CD4-positive, alpha-beta T cell (primary cell): ENCODE measurements at regions of chr10 and their contacts with region 1.

Region 1: DNA sequence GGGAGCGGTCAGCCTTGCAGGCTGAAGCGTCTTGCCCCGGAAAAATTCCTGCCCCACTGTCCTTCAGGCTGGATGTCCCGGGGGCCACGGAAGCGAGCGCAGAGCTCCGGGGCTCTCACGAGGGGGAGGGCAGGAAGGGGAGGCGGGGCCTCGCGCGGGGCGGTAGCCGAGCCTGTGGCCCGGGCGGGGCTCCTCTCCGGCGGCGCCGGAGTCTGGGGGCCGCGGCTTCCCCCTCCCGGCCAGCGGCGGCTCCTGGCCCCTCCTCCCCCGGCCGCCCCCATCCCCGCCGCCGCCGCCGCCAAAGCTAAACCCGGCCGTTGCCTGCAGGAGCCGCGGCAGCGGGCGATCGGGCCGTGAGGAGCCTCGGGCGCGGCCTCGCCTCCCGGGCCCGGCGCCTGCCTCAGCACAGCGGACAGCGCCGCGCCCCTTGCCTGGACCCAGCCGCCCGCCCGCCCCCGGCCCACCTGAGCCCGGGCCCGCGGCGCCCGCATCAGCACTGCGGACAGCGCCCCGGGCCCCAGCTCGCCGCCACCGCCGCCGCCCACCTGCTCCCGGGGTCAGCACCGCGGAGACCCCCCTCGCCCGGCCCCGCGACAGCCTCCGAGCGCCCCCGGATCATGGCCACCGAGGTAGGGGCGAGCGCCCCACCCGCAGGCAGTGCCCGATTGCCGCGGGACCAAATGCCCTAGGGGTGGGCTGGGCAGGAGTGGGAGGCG is at the start of gene GOLGA7B:
- DNase-seq: peak; percentile 32 to 82 (median 61)
- ATAC-seq: peak; percentile 78
- H3K4me3 ChIP-seq: peak within 1 kb of the TSS; percentile 74
- H3K4me3 Mint-ChIP-seq: peak within 1 kb of the TSS; percentile 95
- H3K27ac ChIP-seq: no peak within 1 kb of the TSS
- H3K27ac Mint-ChIP-seq: peak within 1 kb of the TSS; percentile 77
- H3K4me1 ChIP-seq: peaks cover 46% of the 10 kb centered on the region
- H3K4me1 Mint-ChIP-seq: peaks cover 42% of the 10 kb centered on the region
- H3K27me3 ChIP-seq: no peaks in the 10 kb centered on the region
- H3K27me3 Mint-ChIP-seq: no peaks in the 10 kb centered on the region
- CTCF ChIP-seq: no peak
- total RNA-seq, gene GOLGA7B: 4.5 to 6.1 TPM

Region 2: GRCh38 chr10:97686962-97687784 is 162.7 kb before region 1 on chr10 and contains the start of gene AVPI1:
- CTCF ChIA-PET with region 1: no interaction called
- POLR2A ChIA-PET with region 1: interaction called, 9 read pairs
- intact Hi-C with region 1: loop called in 1 of 2 experiments (anchors 5 kb)
- DNase-seq: peak; percentile 90 to 98 (median 94)
- ATAC-seq: peak; percentile 91
- H3K4me3 ChIP-seq: peak within 1 kb of the TSS; percentile 82
- H3K4me3 Mint-ChIP-seq: peak within 1 kb of the TSS; percentile 90
- H3K27ac ChIP-seq: peak within 1 kb of the TSS; percentile 52 to 62
- H3K27ac Mint-ChIP-seq: peak within 1 kb of the TSS; percentile 75
- H3K4me1 ChIP-seq: peaks cover 35% of the 10 kb centered on the region
- H3K4me1 Mint-ChIP-seq: peaks cover 16% of the 10 kb centered on the region
- H3K27me3 ChIP-seq: no peaks in the 10 kb centered on the region
- H3K27me3 Mint-ChIP-seq: no peaks in the 10 kb centered on the region
- CTCF ChIP-seq: no peak
- total RNA-seq, gene AVPI1: 10.7 to 11.6 TPM

Region 3: DNA sequence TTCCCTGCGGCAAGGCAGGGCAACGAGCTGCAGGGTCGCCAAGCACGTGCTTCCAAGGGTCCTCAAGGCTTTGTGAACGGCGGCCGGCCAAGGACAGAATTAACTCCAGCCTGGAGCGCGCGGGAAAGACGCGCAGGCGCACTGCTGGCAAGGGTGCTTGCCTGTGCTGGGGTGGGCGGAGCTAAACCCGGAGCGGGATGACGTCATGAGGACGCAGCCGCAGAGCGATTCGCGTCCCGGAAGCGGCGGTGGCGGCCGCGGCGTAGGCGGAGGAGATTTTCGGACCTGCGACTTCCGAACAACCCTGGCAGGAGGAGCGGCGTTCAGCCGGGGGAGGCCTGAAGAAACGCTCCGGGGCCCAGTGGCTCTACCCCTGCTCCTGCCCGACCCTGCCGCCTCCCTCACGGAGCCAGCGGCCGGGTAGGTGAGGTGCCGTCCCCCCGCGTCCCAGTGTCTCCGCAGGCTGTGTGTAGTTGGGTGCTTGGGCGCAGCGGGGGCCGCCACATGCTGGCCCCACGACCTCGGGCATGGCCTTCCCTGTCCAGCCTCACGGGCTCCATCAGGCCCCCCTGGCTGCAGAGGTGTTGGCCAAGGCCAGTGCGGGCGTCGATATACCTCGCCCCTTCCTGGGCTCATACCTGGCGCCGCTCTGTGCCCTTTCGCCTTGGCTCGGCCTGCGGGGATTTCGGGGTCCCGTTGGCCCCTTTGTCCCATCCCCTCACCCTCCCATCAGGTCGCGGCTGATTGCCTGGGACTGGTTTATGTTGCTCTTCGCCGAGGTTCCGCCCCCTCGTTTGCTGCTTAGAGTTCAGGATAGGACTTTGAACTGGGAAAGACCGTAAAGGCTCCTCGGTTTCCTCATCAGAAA is 112.7 kb before region 1 on chr10 and contains the start of gene ZFYVE27:
- CTCF ChIA-PET with region 1: no interaction called
- POLR2A ChIA-PET with region 1: interaction called, 4 read pairs
- intact Hi-C with region 1: loop called in 1 of 2 experiments (anchors 5 kb)
- DNase-seq: peak; percentile 91 to 98 (median 94)
- ATAC-seq: peak; percentile 90
- H3K4me3 ChIP-seq: peak within 1 kb of the TSS; percentile 80
- H3K4me3 Mint-ChIP-seq: peak within 1 kb of the TSS; percentile 97
- H3K27ac ChIP-seq: peak within 1 kb of the TSS; percentile 85 to 92
- H3K27ac Mint-ChIP-seq: peak within 1 kb of the TSS; percentile 92
- H3K4me1 ChIP-seq: peaks cover 37% of the 10 kb centered on the region
- H3K4me1 Mint-ChIP-seq: peaks cover 57% of the 10 kb centered on the region
- H3K27me3 ChIP-seq: no peaks in the 10 kb centered on the region
- H3K27me3 Mint-ChIP-seq: no peaks in the 10 kb centered on the region
- CTCF ChIP-seq: no peak
- total RNA-seq, gene ZFYVE27: 58.4 to 60.6 TPM

Region 4: DNA sequence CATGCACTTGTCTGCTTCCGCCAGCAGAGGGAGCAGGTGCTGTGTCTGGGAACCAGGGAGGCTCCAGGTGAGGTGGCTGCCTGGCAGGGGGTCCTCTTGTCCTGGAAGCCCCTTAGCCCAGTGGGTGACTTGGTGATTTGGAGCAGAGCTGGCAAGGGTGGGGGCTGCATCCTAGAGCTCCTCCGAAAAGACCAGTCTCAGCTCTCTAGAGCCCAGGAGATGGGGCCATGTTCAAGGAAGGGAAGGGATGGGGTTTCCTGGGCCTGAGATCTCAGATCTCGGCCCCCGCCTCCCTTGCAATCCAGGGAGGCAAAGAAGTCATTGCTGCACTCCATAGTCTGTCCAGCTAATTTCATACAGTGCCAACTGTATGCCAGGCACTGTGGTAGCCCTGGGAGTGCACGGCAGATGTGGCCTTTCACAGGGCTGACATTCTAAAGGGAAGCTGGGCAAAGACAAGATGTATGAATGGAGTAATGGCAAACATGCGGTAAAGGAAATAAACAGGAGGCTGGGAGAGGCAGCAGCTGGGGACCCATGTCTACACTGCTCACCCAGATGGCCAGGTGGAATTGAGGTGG is 57.6 kb before region 1 on chr10:
- CTCF ChIA-PET with region 1: no interaction called
- POLR2A ChIA-PET with region 1: interaction called, 15 read pairs
- intact Hi-C with region 1: no loop called
- DNase-seq: peak; percentile 59 to 83 (median 66)
- ATAC-seq: peak; percentile 77
- H3K4me3 ChIP-seq: no peak overlapping the region
- H3K4me3 Mint-ChIP-seq: no peak overlapping the region
- H3K27ac ChIP-seq: no peak overlapping the region
- H3K27ac Mint-ChIP-seq: no peak overlapping the region
- H3K4me1 ChIP-seq: peaks cover 27% of the 10 kb centered on the region
- H3K4me1 Mint-ChIP-seq: peaks cover 29% of the 10 kb centered on the region
- H3K27me3 ChIP-seq: no peaks in the 10 kb centered on the region
- H3K27me3 Mint-ChIP-seq: peaks cover 5% of the 10 kb centered on the region
- CTCF ChIP-seq: peak; percentile 95

Region 5: DNA sequence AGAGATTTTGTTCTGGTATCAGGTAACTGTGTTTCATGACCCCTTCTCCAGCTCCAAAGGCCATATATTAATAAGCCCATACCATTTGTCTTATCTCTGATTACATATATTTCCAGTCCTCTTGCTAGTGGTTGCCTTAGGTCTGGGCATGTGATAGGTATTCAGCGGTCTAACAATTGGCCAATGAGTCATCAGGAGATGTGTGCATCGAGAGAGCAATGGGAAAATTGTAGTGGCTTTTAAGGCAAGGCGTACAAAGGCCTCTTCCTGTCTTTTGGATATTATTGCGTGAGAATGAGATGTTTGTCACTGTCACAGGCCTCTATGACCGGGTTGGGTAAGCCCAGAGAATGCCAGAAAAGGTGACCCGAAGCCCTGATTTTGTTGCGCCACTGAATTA is 39.4 kb before region 1 on chr10:
- CTCF ChIA-PET with region 1: no interaction called
- POLR2A ChIA-PET with region 1: no interaction called
- intact Hi-C with region 1: loop called in 1 of 2 experiments (anchors 5 kb)
- DNase-seq: no peak
- ATAC-seq: no peak
- H3K4me3 ChIP-seq: no peak overlapping the region
- H3K4me3 Mint-ChIP-seq: no peak overlapping the region
- H3K27ac ChIP-seq: no peak overlapping the region
- H3K27ac Mint-ChIP-seq: no peak overlapping the region
- H3K4me1 ChIP-seq: no peaks in the 10 kb centered on the region
- H3K4me1 Mint-ChIP-seq: no peaks in the 10 kb centered on the region
- H3K27me3 ChIP-seq: no peaks in the 10 kb centered on the region
- H3K27me3 Mint-ChIP-seq: no peaks in the 10 kb centered on the region
- CTCF ChIP-seq: no peak

Region 6: GRCh38 chr10:97869091-97870042 is 19.5 kb after region 1 on chr10:
- CTCF ChIA-PET with region 1: interaction called, 3 read pairs
- POLR2A ChIA-PET with region 1: interaction called, 11 read pairs
- intact Hi-C with region 1: no loop called
- DNase-seq: peak; percentile 70 to 93 (median 78)
- ATAC-seq: peak; percentile 100
- H3K4me3 ChIP-seq: no peak overlapping the region
- H3K4me3 Mint-ChIP-seq: no peak overlapping the region
- H3K27ac ChIP-seq: peak overlapping the region in 1 of 2 donors; percentile 4
- H3K27ac Mint-ChIP-seq: peak overlapping the region; percentile 66
- H3K4me1 ChIP-seq: peaks cover 14% of the 10 kb centered on the region
- H3K4me1 Mint-ChIP-seq: peaks cover 11% of the 10 kb centered on the region
- H3K27me3 ChIP-seq: no peaks in the 10 kb centered on the region
- H3K27me3 Mint-ChIP-seq: peaks cover 11% of the 10 kb centered on the region
- CTCF ChIP-seq: peak; percentile 86

Region 7: GRCh38 chr10:98446661-98447221 is 596.9 kb after region 1 on chr10 and contains the start of gene HPS1:
- CTCF ChIA-PET with region 1: no interaction called
- POLR2A ChIA-PET with region 1: no interaction called
- intact Hi-C with region 1: loop called in 1 of 2 experiments (anchors 10 kb)
- DNase-seq: peak; percentile 58 to 88 (median 75)
- ATAC-seq: peak; percentile 91
- H3K4me3 ChIP-seq: peak within 1 kb of the TSS; percentile 71
- H3K4me3 Mint-ChIP-seq: peak within 1 kb of the TSS; percentile 94
- H3K27ac ChIP-seq: peak within 1 kb of the TSS; percentile 66 to 77
- H3K27ac Mint-ChIP-seq: peak within 1 kb of the TSS; percentile 93
- H3K4me1 ChIP-seq: peaks cover 41% of the 10 kb centered on the region
- H3K4me1 Mint-ChIP-seq: peaks cover 40% of the 10 kb centered on the region
- H3K27me3 ChIP-seq: no peaks in the 10 kb centered on the region
- H3K27me3 Mint-ChIP-seq: peaks cover 1% of the 10 kb centered on the region
- CTCF ChIP-seq: no peak
- total RNA-seq, gene HPS1: 49.8 to 50.5 TPM